Mammary epithelial cell (primary cell): ENCODE measurements at regions of chr2 and their contacts with region 1.

Region 1: GRCh38 chr2:217551252-217551899 is 451.4 kb downstream of the TNS1 start:
- DNase-seq: peak; percentile 11
- H3K4me3 ChIP-seq: no peak overlapping the region
- H3K27ac ChIP-seq: no peak overlapping the region
- H3K4me1 ChIP-seq: peaks cover 7% of the 10 kb centered on the region
- H3K27me3 ChIP-seq: no peaks in the 10 kb centered on the region
- CTCF ChIP-seq: no peak

Region 2: GRCh38 chr2:217331523-217332139 is 219.7 kb before region 1 on chr2:
- CTCF ChIA-PET with region 1: no interaction called
- dilution Hi-C with region 1: no loop called
- in situ Hi-C with region 1: no loop called
- intact Hi-C with region 1: no loop called
- DNase-seq: peak; percentile 69
- H3K4me3 ChIP-seq: no peak overlapping the region
- H3K27ac ChIP-seq: peak overlapping the region; percentile 12
- H3K4me1 ChIP-seq: peaks cover 33% of the 10 kb centered on the region
- H3K27me3 ChIP-seq: no peaks in the 10 kb centered on the region
- CTCF ChIP-seq: no peak

Region 3: GRCh38 chr2:217491271-217491670 is 60.1 kb before region 1 on chr2:
- CTCF ChIA-PET with region 1: no interaction called
- dilution Hi-C with region 1: loop called (anchors 10 kb)
- in situ Hi-C with region 1: no loop called
- intact Hi-C with region 1: no loop called
- DNase-seq: no peak
- H3K4me3 ChIP-seq: no peak overlapping the region
- H3K27ac ChIP-seq: no peak overlapping the region
- H3K4me1 ChIP-seq: no peaks in the 10 kb centered on the region
- H3K27me3 ChIP-seq: no peaks in the 10 kb centered on the region
- CTCF ChIP-seq: no peak

Region 4: GRCh38 chr2:217872319-217872718 is 320.9 kb after region 1 on chr2:
- CTCF ChIA-PET with region 1: no interaction called
- dilution Hi-C with region 1: no loop called
- in situ Hi-C with region 1: no loop called
- intact Hi-C with region 1: no loop called
- DNase-seq: no peak
- H3K4me3 ChIP-seq: no peak overlapping the region
- H3K27ac ChIP-seq: no peak overlapping the region
- H3K4me1 ChIP-seq: no peaks in the 10 kb centered on the region
- H3K27me3 ChIP-seq: no peaks in the 10 kb centered on the region
- CTCF ChIP-seq: no peak